ENCODE measurements at regions of chr15 and their contacts with region 1.

Region 1: GRCh38 chr15:66504563-66505429 is at the starts of genes RPL4 and ZWILCH:
- DNase-seq: peak; percentile 70
- ATAC-seq: peak; percentile 85
- H3K4me3 Mint-ChIP-seq: peak within 1 kb of the TSS; percentile 100
- H3K27ac Mint-ChIP-seq: peak within 1 kb of the TSS; percentile 100
- H3K4me1 Mint-ChIP-seq: peaks cover 42% of the 10 kb centered on the region
- H3K27me3 Mint-ChIP-seq: no peaks in the 10 kb centered on the region
- CTCF ChIP-seq: no peak
- total RNA-seq, gene RPL4: 3,690 and 4,303 TPM in 2 replicates
- total RNA-seq, gene ZWILCH: 8.4 and 13.7 TPM in 2 replicates

Region 2: GRCh38 chr15:66251790-66252684 is 252.8 kb before region 1 on chr15:
- CTCF ChIA-PET with region 1: no interaction called
- POLR2A ChIA-PET with region 1: no interaction called
- intact Hi-C with region 1: loop called (anchors 2 kb)
- DNase-seq: peak; percentile 49
- ATAC-seq: peak; percentile 62
- H3K4me3 Mint-ChIP-seq: peak overlapping the region; percentile 76
- H3K27ac Mint-ChIP-seq: no peak overlapping the region
- H3K4me1 Mint-ChIP-seq: peaks cover 18% of the 10 kb centered on the region
- H3K27me3 Mint-ChIP-seq: peaks cover 62% of the 10 kb centered on the region
- CTCF ChIP-seq: no peak

Region 3: DNA sequence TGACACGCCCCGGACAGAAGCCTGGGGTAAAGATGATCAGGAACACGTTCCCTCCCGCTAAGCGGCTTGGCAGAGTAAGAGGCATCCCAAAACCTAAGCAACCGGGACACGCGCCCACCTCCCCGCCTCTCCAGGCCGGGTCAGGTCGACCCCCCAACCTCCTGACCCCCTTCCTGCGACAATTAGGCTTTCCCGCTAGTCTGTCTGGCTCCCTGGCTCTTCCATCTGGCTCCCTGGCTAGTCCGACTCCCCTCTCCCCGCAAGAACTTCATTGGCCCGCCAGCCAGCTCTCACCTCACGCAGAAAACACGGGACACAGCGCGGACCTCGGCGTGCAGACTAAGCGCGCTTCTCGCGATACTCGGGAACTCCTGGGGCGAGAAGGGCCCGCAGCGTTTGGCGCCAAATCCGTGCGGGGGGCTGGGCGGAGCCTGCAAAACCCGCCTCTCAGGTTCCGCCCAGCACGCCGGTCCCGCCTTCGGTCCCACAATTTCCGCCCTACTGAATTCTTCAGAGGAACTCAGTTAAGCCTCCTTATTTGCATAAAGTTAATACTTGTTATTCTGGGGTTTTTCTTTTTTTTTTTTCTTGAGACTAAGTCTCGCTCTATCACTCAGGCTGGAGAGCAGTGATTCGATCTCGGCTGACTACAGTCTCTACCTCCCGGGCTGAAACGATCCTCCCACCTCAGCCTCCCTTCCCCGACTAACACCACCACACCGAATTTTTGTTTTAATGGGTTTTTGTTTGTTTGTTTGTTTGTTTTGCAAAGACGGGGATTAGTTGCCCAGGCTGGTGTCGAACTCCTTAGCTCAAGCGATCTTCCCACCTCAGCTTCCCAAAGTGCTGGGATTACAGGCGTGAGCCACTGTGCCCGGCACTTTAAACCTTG is 148.2 kb before region 1 on chr15 and contains the start of gene TIPIN:
- CTCF ChIA-PET with region 1: no interaction called
- POLR2A ChIA-PET with region 1: interaction called, 7 read pairs
- intact Hi-C with region 1: loop called (anchors 1 kb)
- DNase-seq: peak; percentile 92
- ATAC-seq: peak; percentile 94
- H3K4me3 Mint-ChIP-seq: peak within 1 kb of the TSS; percentile 98
- H3K27ac Mint-ChIP-seq: peak within 1 kb of the TSS; percentile 95
- H3K4me1 Mint-ChIP-seq: peaks cover 24% of the 10 kb centered on the region
- H3K27me3 Mint-ChIP-seq: no peaks in the 10 kb centered on the region
- CTCF ChIP-seq: no peak
- total RNA-seq, gene TIPIN: 10.8 and 11.5 TPM in 2 replicates

Region 4: DNA sequence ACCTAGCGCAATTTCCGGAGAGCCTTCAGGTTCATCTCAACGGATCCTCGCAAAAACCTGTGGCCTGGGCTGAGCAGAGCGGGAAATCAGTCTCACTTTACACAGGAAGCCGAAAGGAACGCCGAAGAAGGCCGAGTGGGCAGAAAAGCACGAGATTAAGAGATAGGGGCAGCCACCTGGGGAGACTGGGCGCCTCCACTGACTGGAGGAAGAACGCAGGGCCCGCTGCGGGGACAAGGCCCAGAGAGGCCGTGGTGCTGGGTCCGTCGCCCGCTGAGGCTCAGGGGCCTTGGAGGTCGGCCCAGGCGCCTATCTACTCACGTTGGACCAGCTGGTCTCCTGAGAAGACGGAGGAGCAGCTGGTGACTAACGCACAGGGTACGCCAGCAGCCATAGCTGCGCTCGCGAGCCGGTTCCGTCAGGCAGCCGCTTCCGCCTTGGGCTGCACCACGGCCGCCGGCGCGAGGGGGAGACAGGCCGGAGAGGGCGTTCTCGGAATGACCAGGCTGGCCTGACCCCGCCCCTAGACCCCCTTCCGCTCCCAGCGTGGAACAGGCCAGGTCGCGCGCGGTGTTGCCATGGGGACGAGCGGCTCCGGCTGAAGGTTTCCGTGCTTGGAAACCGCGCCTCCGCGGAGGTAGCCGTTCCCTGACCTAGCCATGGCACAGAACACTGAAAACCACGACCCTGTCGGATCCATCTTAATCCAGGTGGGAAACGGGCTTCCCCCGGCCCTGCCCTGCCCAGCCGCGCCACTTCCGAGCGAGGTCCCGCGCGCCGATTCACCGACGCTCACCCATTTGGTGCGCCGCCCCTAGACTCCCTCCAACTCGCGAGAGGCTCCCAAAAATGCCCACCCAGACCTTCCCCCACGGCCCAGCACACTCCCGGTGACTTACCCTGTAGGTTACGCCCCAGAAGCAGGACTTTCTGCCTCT is 749.7 kb after region 1 on chr15 and contains the starts of genes AAGAB and IQCH:
- CTCF ChIA-PET with region 1: no interaction called
- POLR2A ChIA-PET with region 1: no interaction called
- intact Hi-C with region 1: loop called (anchors 10 kb)
- DNase-seq: peak; percentile 100
- ATAC-seq: peak; percentile 96
- H3K4me3 Mint-ChIP-seq: peak within 1 kb of the TSS; percentile 99
- H3K27ac Mint-ChIP-seq: peak within 1 kb of the TSS; percentile 95
- H3K4me1 Mint-ChIP-seq: peaks cover 26% of the 10 kb centered on the region
- H3K27me3 Mint-ChIP-seq: no peaks in the 10 kb centered on the region
- CTCF ChIP-seq: no peak
- total RNA-seq, gene AAGAB: 48.5 and 50.8 TPM in 2 replicates
- total RNA-seq, gene IQCH: 1.1 and 1.5 TPM in 2 replicates

Measured in activated B cell treated with CpG ODN at 0.5 μM for 24 hours (primary cell).